AG04449 (cell line): ENCODE measurements at regions of chr9 and their contacts with region 1.

Region 1: GRCh38 chr9:3732077-3733038 is 206.6 kb upstream of the RFX3 start:
- DNase-seq: peak; percentile 74
- H3K4me3 ChIP-seq: peak overlapping the region; percentile 29; the same call in 1 of the 2 replicates
- CTCF ChIP-seq: peak; percentile 47

Region 2: DNA sequence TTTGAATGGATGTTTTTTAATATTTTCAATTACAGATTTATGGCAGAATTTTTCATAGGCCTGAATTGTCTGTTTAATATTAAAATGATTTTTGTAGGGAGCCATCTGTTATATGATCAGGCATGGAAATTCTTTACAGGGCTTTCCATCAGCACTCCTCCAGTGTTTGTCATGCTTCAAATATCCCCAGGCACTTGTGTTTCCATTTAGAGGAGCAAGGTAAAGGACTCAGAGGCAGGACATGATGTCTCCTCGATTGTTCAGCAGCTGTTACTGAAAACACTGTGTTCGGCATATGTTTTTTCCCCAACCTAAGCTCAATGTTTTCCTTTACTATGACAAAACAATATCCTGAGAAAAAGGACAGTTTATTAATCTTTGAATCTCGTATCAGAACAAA is 34.3 kb before region 1 on chr9:
- CTCF ChIA-PET with region 1: no interaction called
- POLR2A ChIA-PET with region 1: no interaction called
- DNase-seq: no peak
- H3K4me3 ChIP-seq: no peak overlapping the region
- CTCF ChIP-seq: no peak

Region 3: DNA sequence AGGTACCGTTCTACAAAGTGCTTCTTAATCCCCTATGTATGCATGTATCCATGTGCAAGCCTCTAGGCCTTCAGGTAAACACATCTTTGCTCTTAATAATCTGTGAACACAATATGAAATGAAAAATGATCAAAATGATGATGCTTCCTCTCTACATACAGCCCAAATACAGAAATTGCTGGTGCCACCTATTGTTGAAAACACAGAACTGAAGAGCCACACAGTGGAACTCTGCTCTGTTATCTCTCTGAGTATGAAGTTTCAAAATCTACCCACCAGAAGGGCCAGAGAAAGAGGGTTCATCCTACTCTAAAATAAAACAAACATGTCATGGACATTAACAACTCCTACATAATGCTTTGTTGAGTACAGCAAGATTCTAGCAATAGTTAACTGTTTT is 496.2 kb after region 1 on chr9:
- CTCF ChIA-PET with region 1: interaction called, 30 read pairs
- POLR2A ChIA-PET with region 1: interaction called, 3 read pairs
- DNase-seq: no peak
- H3K4me3 ChIP-seq: no peak overlapping the region
- CTCF ChIP-seq: peak; percentile 46

Region 4: DNA sequence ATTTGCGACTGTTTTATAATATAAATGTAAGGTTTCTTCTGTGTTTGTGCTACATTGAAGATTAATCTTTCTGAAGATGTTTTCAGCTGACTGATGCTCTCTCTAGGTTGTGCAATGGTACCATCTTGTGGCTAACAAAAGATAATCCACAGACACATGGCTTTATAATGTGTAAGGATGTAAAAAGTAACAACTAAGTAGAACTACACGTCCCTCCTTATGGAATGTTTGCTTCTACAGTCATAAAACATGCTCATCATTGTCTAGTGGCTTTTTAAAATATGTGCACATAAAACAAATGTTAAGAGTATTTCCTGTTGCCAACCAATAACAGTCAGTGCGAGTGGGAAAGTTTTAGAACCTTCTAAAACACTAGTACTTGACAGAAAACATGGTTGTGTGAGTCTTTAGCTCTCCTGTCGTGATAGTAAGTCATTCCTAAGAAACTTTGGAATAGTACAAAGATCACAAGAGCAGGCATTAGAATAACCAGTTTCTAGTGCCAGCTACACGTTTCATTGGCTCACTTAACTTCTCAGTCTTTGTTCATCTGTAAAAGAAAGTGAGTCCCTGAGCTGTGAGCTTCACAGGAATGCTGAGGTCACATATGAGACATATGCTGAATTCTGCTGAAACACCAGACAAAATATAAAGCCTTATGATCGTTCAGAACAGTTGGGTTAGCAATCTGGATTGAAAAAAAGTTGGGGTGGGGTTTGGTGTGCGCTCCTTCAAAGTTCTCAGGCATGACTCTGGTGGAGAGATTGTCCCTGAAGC is 643.3 kb after region 1 on chr9:
- CTCF ChIA-PET with region 1: interaction called, 11 read pairs
- POLR2A ChIA-PET with region 1: no interaction called
- DNase-seq: peak; percentile 85
- H3K4me3 ChIP-seq: no peak overlapping the region
- CTCF ChIP-seq: peak; percentile 41